ENCODE measurements at regions of chr17 and their contacts with region 1.

Region 1: DNA sequence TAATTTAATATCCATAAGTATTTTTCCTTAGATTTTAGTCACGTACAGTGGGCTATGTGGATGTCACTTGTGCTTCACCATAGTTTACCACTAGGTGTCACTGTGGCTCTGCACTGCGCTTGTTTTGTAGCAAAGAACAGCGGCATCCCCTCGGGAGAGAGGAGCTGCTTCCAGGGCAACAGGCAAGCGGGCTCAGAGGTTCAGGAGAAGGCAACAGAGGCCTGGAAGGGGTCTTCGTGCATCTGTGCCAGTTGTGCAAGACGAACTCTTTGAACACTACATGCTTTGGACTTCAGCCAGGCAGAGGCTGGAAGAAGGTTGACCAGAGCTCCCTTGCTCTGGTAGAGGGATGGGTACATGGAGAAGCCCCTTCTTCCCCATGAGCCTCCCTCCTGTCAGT is 20.6 kb downstream of the CYB561 start:
- DNase-seq: peak; percentile 58
- H3K4me3 Mint-ChIP-seq: no peak overlapping the region
- H3K27ac Mint-ChIP-seq: no peak overlapping the region
- H3K4me1 Mint-ChIP-seq: peaks cover 34% of the 10 kb centered on the region
- H3K27me3 Mint-ChIP-seq: peaks cover 6% of the 10 kb centered on the region

Region 2: GRCh38 chr17:63406689-63407330 is 18.7 kb before region 1 on chr17:
- intact Hi-C with region 1: no loop called
- DNase-seq: peak; percentile 42
- H3K4me3 Mint-ChIP-seq: no peak overlapping the region
- H3K27ac Mint-ChIP-seq: no peak overlapping the region
- H3K4me1 Mint-ChIP-seq: peaks cover 5% of the 10 kb centered on the region
- H3K27me3 Mint-ChIP-seq: no peaks in the 10 kb centered on the region

Region 3: GRCh38 chr17:63478791-63479494 is 53.5 kb after region 1 on chr17:
- intact Hi-C with region 1: loop called (anchors 1 kb)
- DNase-seq: peak; percentile 68
- H3K4me3 Mint-ChIP-seq: peak overlapping the region; percentile 67
- H3K27ac Mint-ChIP-seq: no peak overlapping the region
- H3K4me1 Mint-ChIP-seq: peaks cover 14% of the 10 kb centered on the region
- H3K27me3 Mint-ChIP-seq: peaks cover 36% of the 10 kb centered on the region

Region 4: DNA sequence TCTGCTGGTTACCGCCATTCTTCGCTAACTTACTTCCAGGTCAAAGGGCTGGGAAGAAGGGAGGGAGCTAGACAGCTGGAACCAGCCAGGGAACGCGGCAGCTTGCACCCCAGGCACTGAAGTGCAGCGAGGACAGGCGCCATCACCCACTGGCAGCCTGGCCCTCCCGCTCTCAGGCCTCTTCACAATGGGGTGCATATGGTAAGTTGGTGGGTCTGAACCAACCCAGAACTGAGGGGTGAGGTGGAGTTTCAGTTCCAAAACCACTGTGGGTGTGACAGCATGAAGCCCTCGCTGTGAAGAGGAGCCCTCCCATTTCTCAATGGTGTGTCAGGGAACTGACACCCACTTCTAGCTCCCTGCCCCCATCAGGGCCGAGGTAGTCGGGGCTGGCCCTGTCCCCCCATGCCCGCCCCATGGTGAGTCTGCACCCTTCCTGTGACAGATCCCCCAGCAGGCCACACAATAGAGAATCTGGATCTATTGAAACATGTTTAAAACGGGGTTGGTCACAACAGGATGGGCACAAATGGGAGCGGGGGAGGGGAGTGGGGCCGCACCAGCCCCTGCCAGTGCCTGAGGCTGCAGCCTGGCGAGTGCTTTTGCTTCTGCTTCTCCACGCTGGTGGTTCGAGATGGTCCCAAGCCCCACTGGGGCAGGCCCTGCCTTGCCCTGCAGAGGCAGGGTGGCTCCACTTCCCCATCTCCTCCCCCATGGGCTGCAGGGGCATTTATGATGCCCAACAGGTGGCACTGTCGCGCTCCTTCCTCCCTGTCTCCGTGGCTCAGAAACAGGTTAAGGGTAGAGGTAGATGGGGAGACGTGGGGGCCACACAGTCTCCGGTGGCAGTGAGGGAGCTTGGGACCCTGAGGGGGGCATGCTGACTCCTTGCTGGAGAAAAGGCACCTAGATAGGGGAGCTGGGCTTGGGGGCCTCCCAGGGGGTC is 272.1 kb after region 1 on chr17:
- intact Hi-C with region 1: loop called (anchors 2 kb)
- DNase-seq: peak; percentile 76
- H3K4me3 Mint-ChIP-seq: peak overlapping the region; percentile 96
- H3K27ac Mint-ChIP-seq: peak overlapping the region; percentile 96
- H3K4me1 Mint-ChIP-seq: peaks cover 53% of the 10 kb centered on the region
- H3K27me3 Mint-ChIP-seq: no peaks in the 10 kb centered on the region

Region 5: GRCh38 chr17:63773381-63774140 is 348.1 kb after region 1 on chr17 and contains the start of gene CCDC47:
- intact Hi-C with region 1: loop called (anchors 10 kb)
- DNase-seq: peak; percentile 99
- H3K4me3 Mint-ChIP-seq: peak within 1 kb of the TSS; percentile 96
- H3K27ac Mint-ChIP-seq: peak within 1 kb of the TSS; percentile 100
- H3K4me1 Mint-ChIP-seq: peaks cover 63% of the 10 kb centered on the region
- H3K27me3 Mint-ChIP-seq: no peaks in the 10 kb centered on the region
- total RNA-seq, gene CCDC47: 74.8 and 79.2 TPM in 2 replicates